ENCODE measurements at regions of chr2 and their contacts with region 1.

Region 1: DNA sequence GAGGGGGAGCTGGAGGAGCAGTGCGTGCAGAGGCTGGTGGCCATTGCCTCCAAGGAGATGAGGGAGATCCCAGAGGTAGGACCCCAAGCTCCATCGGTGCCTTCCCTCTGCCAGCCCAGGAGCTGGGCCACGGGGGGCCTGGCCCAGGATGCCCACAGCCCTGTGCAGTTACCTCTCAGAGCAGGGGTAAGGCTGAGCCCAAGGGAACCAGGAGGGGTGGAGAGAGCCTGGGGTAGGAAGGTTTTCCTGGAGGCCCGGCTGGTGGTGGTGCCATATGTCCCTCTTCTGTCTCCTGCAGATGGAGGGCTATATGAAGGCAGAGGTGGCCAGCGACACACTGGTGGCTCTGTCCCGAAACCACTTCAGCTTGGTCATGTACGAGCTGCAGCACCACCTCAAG is 11.4 kb downstream of the MROH2A start:
- DNase-seq: no peak
- H3K4me3 ChIP-seq: no peak overlapping the region
- H3K27ac ChIP-seq: no peak overlapping the region
- H3K4me1 ChIP-seq: no peaks in the 10 kb centered on the region
- H3K27me3 ChIP-seq: peaks cover 3% of the 10 kb centered on the region
- CTCF ChIP-seq: no peak
- EP300 ChIP-seq: no peak
- POLR2A ChIP-seq: no peak

Region 2: GRCh38 chr2:232018181-232018580 is 1771.4 kb before region 1 on chr2:
- in situ Hi-C with region 1: no loop called
- intact Hi-C with region 1: loop called (anchors 5 kb)
- DNase-seq: no peak
- H3K4me3 ChIP-seq: no peak overlapping the region
- H3K27ac ChIP-seq: no peak overlapping the region
- H3K4me1 ChIP-seq: peaks cover 0 to 8% (median 0%) of the 10 kb centered on the region in 4 donors
- H3K27me3 ChIP-seq: no peaks in the 10 kb centered on the region
- CTCF ChIP-seq: no peak
- EP300 ChIP-seq: no peak
- POLR2A ChIP-seq: no peak

Region 3: GRCh38 chr2:233620204-233620603 is 169.3 kb before region 1 on chr2:
- in situ Hi-C with region 1: no loop called
- intact Hi-C with region 1: no loop called
- DNase-seq: peak; percentile 30
- H3K4me3 ChIP-seq: no peak overlapping the region
- H3K27ac ChIP-seq: peak overlapping the region in 3 of 4 donors; percentile 9 to 36 (median 13)
- H3K4me1 ChIP-seq: peaks cover 0 to 9% (median 2%) of the 10 kb centered on the region in 4 donors
- H3K27me3 ChIP-seq: no peaks in the 10 kb centered on the region
- CTCF ChIP-seq: no peak
- EP300 ChIP-seq: no peak
- POLR2A ChIP-seq: no peak

Region 4: GRCh38 chr2:233817361-233817911 is 27.9 kb after region 1 on chr2:
- in situ Hi-C with region 1: no loop called
- intact Hi-C with region 1: no loop called
- DNase-seq: no peak
- H3K4me3 ChIP-seq: no peak overlapping the region
- H3K27ac ChIP-seq: no peak overlapping the region
- H3K4me1 ChIP-seq: no peaks in the 10 kb centered on the region
- H3K27me3 ChIP-seq: no peaks in the 10 kb centered on the region
- CTCF ChIP-seq: no peak
- EP300 ChIP-seq: no peak
- POLR2A ChIP-seq: no peak

Region 5: GRCh38 chr2:234241656-234242458 is 452.3 kb after region 1 on chr2:
- in situ Hi-C with region 1: no loop called
- intact Hi-C with region 1: no loop called
- DNase-seq: no peak
- H3K4me3 ChIP-seq: no peak overlapping the region
- H3K27ac ChIP-seq: no peak overlapping the region
- H3K4me1 ChIP-seq: peaks cover 0 to 5% (median 0%) of the 10 kb centered on the region in 4 donors
- H3K27me3 ChIP-seq: no peaks in the 10 kb centered on the region
- CTCF ChIP-seq: no peak
- EP300 ChIP-seq: no peak
- POLR2A ChIP-seq: no peak

Measured in transverse colon (tissue), 4 donors.